Heart right ventricle (tissue), 16 donors: ENCODE measurements at regions of chr1 and their contacts with region 1.

Region 1: DNA sequence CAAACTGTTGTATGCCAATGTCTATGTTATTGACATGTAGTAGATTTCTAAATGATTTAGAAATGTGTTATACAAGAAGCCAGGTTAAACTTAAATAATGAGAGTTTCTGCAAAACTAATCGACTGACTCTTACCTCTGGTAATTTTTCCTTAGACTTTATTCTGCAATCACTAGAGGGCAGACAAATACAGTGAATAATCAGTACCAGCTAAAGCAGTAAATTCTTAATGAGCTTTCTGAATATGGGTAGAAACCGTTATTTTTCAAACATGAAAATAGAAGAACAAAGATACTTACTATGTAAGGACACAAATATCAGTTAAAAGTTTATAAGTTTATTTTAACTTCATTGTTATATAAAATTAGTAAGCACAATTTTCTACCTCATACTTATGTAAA is 97.9 kb upstream of the RGS1 start:
- DNase-seq: no peak
- ATAC-seq: peak in 7 of 8 donors; percentile 39 to 81 (median 76)
- H3K4me3 ChIP-seq: no peak overlapping the region
- H3K27ac ChIP-seq: peak overlapping the region in 1 of 10 donors; percentile 8
- H3K4me1 ChIP-seq: peaks cover 0 to 14% (median 0%) of the 10 kb centered on the region in 9 donors
- H3K27me3 ChIP-seq: peaks cover 0 to 11% (median 0%) of the 10 kb centered on the region in 7 donors
- CTCF ChIP-seq: peak in 8 of 9 donors; percentile 26 to 73 (median 63)

Region 2: GRCh38 chr1:191388253-191388652 is 1089.4 kb before region 1 on chr1:
- intact Hi-C with region 1: no loop called
- DNase-seq: no peak
- ATAC-seq: no peak
- H3K4me3 ChIP-seq: no peak overlapping the region
- H3K27ac ChIP-seq: no peak overlapping the region
- H3K4me1 ChIP-seq: no peaks in the 10 kb centered on the region
- H3K27me3 ChIP-seq: no peaks in the 10 kb centered on the region
- CTCF ChIP-seq: no peak

Region 3: GRCh38 chr1:192609110-192610079 is 131.8 kb after region 1 on chr1:
- intact Hi-C with region 1: loop called (anchors 2 to 10 kb)
- DNase-seq: peak; percentile 9 to 17
- ATAC-seq: peak in 7 of 8 donors; percentile 26 to 89 (median 52)
- H3K4me3 ChIP-seq: no peak overlapping the region
- H3K27ac ChIP-seq: no peak overlapping the region
- H3K4me1 ChIP-seq: peaks cover 0 to 22% (median 0%) of the 10 kb centered on the region in 9 donors
- H3K27me3 ChIP-seq: no peaks in the 10 kb centered on the region
- CTCF ChIP-seq: no peak

Region 4: DNA sequence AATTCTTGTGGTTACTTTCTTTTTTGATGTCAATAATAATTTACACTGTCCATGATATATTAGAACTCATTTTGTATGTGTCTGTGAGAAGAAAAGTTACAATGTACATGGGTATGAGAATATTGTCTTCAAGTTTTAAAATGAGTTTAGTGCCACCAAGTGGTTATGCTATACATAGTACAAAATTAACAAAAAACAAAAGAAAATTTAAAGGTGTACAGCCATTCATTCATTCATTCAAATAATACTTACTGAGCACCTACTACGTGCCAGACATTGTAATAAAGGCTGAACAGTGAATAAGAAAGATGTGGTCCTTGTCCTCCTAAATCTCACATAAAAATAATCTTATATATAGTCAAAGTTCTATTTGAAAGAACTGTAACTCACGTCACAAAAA is 553.8 kb after region 1 on chr1:
- intact Hi-C with region 1: loop called in 2 of 10 experiments (anchors 5 kb)
- DNase-seq: no peak
- ATAC-seq: no peak
- H3K4me3 ChIP-seq: no peak overlapping the region
- H3K27ac ChIP-seq: no peak overlapping the region
- H3K4me1 ChIP-seq: peaks cover 0 to 5% (median 0%) of the 10 kb centered on the region in 9 donors
- H3K27me3 ChIP-seq: no peaks in the 10 kb centered on the region
- CTCF ChIP-seq: peak in 5 of 9 donors; percentile 23 to 44 (median 39)

Region 5: GRCh38 chr1:193121616-193122593 is 644.3 kb after region 1 on chr1 and contains the start of gene CDC73:
- intact Hi-C with region 1: loop called in 4 of 10 experiments (anchors 5 to 10 kb)
- DNase-seq: peak; percentile 97 to 99
- ATAC-seq: peak; percentile 98 to 100 (median 99)
- H3K4me3 ChIP-seq: peak within 1 kb of the TSS; percentile 59 to 91 (median 72)
- H3K27ac ChIP-seq: peak within 1 kb of the TSS; percentile 89 to 98 (median 95)
- H3K4me1 ChIP-seq: peaks cover 10 to 41% (median 34%) of the 10 kb centered on the region in 9 donors
- H3K27me3 ChIP-seq: no peaks in the 10 kb centered on the region
- CTCF ChIP-seq: peak; percentile 72 to 98 (median 94)
- total RNA-seq, gene CDC73: 47.9 to 70.2 (median 57.0) TPM